ENCODE measurements at regions of chr5 and their contacts with region 1.

Region 1: GRCh38 chr5:54083851-54084250 is 226.5 kb downstream of the ARL15 start:
- DNase-seq: no peak
- ATAC-seq: no peak

Region 2: DNA sequence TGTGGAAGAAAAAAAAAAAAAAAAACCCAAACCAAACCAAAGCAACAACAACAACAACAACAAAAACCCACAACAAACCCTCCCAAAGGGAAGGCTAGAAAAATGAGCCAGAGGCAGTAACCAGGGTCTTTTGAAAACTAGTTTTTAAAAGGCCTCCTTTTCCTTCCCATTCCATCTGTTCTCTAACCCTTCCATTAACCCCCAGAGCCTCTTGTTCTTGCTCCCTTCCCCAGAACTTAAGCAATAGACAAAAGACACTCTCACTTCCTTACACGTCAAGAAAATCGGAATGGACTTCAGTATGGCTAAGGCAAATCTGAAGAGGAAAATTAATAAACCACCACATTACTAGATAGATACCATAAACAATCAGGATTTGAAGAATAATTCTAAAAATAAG is 66.3 kb before region 1 on chr5:
- intact Hi-C with region 1: loop called in 1 of 2 experiments (anchors 2 kb)
- DNase-seq: no peak
- ATAC-seq: no peak

Region 3: GRCh38 chr5:54917323-54917722 is 833.5 kb after region 1 on chr5:
- intact Hi-C with region 1: no loop called
- DNase-seq: no peak
- ATAC-seq: no peak